Activated CD8-positive, alpha-beta T cell treated with anti-CD3 and anti-CD28 coated beads, Interleukin-2, amount 10 ng/mL, durations not matched to agents 7 days and 5 days (primary cell): ENCODE measurements at regions of chrX and their contacts with region 1.

Region 1: GRCh38 chrX:150715184-150715583 is 22.0 kb downstream of the MTMR1 start:
- DNase-seq: no peak
- ATAC-seq: no peak
- H3K4me3 Mint-ChIP-seq: no peak overlapping the region
- H3K27ac Mint-ChIP-seq: no peak overlapping the region
- H3K4me1 Mint-ChIP-seq: peaks cover 14% of the 10 kb centered on the region
- H3K27me3 Mint-ChIP-seq: no peaks in the 10 kb centered on the region

Region 2: DNA sequence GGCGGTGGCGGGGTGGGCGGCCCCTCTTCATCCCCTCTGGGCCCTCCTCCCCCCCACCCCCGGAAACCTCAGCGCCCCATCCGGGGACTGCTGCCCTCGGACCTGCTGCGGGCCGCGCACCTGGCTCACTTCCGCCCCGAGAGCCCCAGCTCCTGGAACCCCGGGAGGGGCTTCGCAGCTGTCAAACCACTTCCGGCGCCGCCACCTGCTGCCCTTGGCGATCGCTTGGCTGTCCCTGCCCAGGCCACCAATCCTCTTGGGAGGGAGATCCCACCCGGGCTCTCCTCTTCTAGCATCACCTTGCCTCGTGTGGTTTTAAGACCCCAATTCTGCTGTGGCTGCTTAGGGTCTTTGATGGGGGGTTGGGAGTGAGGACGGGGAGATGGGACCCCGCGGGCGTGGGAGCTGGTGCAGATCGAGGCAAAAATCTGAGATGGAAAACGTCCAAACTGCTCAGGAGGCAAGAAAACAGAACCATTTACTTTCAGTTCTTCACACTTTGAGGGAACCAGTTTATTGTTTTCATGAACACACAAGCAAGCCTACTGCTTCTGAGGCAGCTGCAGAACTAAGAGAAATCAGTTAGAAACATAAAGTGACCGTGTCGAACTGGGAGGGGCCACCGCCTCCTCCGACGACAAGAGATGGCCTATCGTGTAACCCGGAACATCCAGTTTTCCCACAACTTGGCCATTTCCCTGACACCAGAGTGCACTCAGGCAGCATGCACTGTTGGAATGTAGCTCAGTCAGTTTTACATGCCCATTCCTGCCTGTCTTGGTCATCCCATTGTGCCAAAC is 21.2 kb before region 1 on chrX:
- CTCF ChIA-PET with region 1: interaction called, 11 read pairs
- POLR2A ChIA-PET with region 1: interaction called, 3 read pairs
- DNase-seq: peak; percentile 87
- ATAC-seq: peak; percentile 70
- H3K4me3 Mint-ChIP-seq: peak overlapping the region; percentile 91
- H3K27ac Mint-ChIP-seq: peak overlapping the region; percentile 98
- H3K4me1 Mint-ChIP-seq: peaks cover 60% of the 10 kb centered on the region
- H3K27me3 Mint-ChIP-seq: no peaks in the 10 kb centered on the region

Region 3: GRCh38 chrX:151009582-151009981 is 294.4 kb after region 1 on chrX:
- CTCF ChIA-PET with region 1: no interaction called
- POLR2A ChIA-PET with region 1: no interaction called
- DNase-seq: no peak
- ATAC-seq: no peak
- H3K4me3 Mint-ChIP-seq: no peak overlapping the region
- H3K27ac Mint-ChIP-seq: no peak overlapping the region
- H3K4me1 Mint-ChIP-seq: no peaks in the 10 kb centered on the region
- H3K27me3 Mint-ChIP-seq: peaks cover 2% of the 10 kb centered on the region